B cell (primary cell): ENCODE measurements at regions of chr2 and their contacts with region 1.

Region 1: DNA sequence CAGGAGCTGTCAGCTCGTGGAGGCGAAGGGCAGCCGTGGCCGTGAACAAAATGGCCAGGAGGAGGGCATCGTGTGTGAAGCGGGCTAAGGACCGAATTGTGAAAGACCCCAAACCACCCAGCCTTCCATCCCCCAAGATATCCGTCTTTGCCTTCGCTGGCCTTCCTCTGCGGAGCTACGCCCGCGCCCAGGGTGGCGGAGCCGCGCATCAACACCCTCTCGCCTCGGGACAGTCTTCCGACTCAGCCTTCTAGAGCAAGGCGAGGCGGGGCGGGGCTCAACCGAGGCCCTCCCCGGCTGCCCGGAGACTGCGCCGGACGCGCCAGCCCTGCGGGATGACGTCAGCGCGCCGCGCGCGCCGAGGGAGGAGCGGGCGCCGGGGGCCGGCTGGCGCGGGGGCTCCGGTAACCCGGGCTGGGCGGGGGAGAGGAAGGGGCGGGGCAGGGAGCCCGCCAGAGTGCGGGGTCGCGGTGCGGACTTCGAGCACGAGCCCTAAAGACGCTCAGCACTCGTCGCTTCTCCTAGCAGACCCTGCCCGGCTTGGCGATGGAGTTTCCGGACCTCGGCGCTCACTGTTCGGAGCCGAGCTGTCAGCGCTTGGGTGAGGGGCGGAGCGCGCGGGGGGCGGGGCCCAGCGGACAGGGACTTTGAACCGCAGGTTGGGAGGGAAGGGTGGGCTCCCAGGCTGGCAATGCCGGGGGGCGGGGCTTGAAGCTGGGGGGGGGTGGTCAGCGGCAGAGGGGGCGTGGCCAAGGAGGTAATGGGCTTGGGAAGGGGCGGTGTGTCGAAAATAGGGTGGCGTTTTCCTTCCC is at the start of gene ZFAND2B:
- DNase-seq: peak; percentile 97
- ATAC-seq: peak; percentile 91
- H3K4me3 ChIP-seq: peak within 1 kb of the TSS; percentile 53 to 82 (median 76)
- H3K4me3 Mint-ChIP-seq: peak within 1 kb of the TSS; percentile 96
- H3K27ac ChIP-seq: peak within 1 kb of the TSS; percentile 84 to 94
- H3K27ac Mint-ChIP-seq: peak within 1 kb of the TSS; percentile 98
- H3K4me1 ChIP-seq: peaks cover 16 to 23% of the 10 kb centered on the region in 2 donors
- H3K4me1 Mint-ChIP-seq: peaks cover 28% of the 10 kb centered on the region
- H3K27me3 ChIP-seq: no peaks in the 10 kb centered on the region
- H3K27me3 Mint-ChIP-seq: no peaks in the 10 kb centered on the region
- CTCF ChIP-seq: no peak
- total RNA-seq, gene ZFAND2B: 55.2 and 58.7 TPM in 2 replicates

Region 2: GRCh38 chr2:219057709-219058540 is 148.7 kb before region 1 on chr2:
- CTCF ChIA-PET with region 1: interaction called, 12 read pairs
- POLR2A ChIA-PET with region 1: interaction called, 5 read pairs
- intact Hi-C with region 1: no loop called
- DNase-seq: peak; percentile 85
- ATAC-seq: peak; percentile 98
- H3K4me3 ChIP-seq: peak overlapping the region in 2 of 5 experiments; percentile 12 to 35
- H3K4me3 Mint-ChIP-seq: peak overlapping the region; percentile 74
- H3K27ac ChIP-seq: no peak overlapping the region
- H3K27ac Mint-ChIP-seq: peak overlapping the region; percentile 46
- H3K4me1 ChIP-seq: peaks cover 35 to 41% of the 10 kb centered on the region in 2 donors
- H3K4me1 Mint-ChIP-seq: peaks cover 24% of the 10 kb centered on the region
- H3K27me3 ChIP-seq: peaks cover 0 to 59% (median 45%) of the 10 kb centered on the region in 4 experiments
- H3K27me3 Mint-ChIP-seq: peaks cover 50% of the 10 kb centered on the region
- CTCF ChIP-seq: peak; percentile 91

Region 3: GRCh38 chr2:219171231-219171651 is 35.4 kb before region 1 on chr2:
- CTCF ChIA-PET with region 1: interaction called, 63 read pairs
- POLR2A ChIA-PET with region 1: interaction called, 46 read pairs
- intact Hi-C with region 1: loop called (anchors 1 kb)
- DNase-seq: peak; percentile 67
- ATAC-seq: peak; percentile 52
- H3K4me3 ChIP-seq: no peak overlapping the region
- H3K4me3 Mint-ChIP-seq: no peak overlapping the region
- H3K27ac ChIP-seq: peak overlapping the region in 1 of 2 donors; percentile 21
- H3K27ac Mint-ChIP-seq: peak overlapping the region; percentile 67
- H3K4me1 ChIP-seq: peaks cover 6 to 28% of the 10 kb centered on the region in 2 donors
- H3K4me1 Mint-ChIP-seq: peaks cover 25% of the 10 kb centered on the region
- H3K27me3 ChIP-seq: no peaks in the 10 kb centered on the region
- H3K27me3 Mint-ChIP-seq: no peaks in the 10 kb centered on the region
- CTCF ChIP-seq: peak; percentile 83

Region 4: GRCh38 chr2:219218732-219219701 is 12.4 kb after region 1 on chr2 and contains the start of gene ABCB6:
- CTCF ChIA-PET with region 1: interaction called, 10 read pairs
- POLR2A ChIA-PET with region 1: interaction called, 7 read pairs
- intact Hi-C with region 1: loop called (anchors 1 kb)
- DNase-seq: peak; percentile 92
- ATAC-seq: peak; percentile 95
- H3K4me3 ChIP-seq: peak within 1 kb of the TSS; percentile 51 to 74 (median 66)
- H3K4me3 Mint-ChIP-seq: peak within 1 kb of the TSS; percentile 87
- H3K27ac ChIP-seq: peak within 1 kb of the TSS; percentile 0 to 55
- H3K27ac Mint-ChIP-seq: peak within 1 kb of the TSS; percentile 86
- H3K4me1 ChIP-seq: peaks cover 17 to 21% of the 10 kb centered on the region in 2 donors
- H3K4me1 Mint-ChIP-seq: peaks cover 20% of the 10 kb centered on the region
- H3K27me3 ChIP-seq: no peaks in the 10 kb centered on the region
- H3K27me3 Mint-ChIP-seq: no peaks in the 10 kb centered on the region
- CTCF ChIP-seq: no peak
- total RNA-seq, gene ABCB6: 10.5 and 12.3 TPM in 2 replicates

Region 5: DNA sequence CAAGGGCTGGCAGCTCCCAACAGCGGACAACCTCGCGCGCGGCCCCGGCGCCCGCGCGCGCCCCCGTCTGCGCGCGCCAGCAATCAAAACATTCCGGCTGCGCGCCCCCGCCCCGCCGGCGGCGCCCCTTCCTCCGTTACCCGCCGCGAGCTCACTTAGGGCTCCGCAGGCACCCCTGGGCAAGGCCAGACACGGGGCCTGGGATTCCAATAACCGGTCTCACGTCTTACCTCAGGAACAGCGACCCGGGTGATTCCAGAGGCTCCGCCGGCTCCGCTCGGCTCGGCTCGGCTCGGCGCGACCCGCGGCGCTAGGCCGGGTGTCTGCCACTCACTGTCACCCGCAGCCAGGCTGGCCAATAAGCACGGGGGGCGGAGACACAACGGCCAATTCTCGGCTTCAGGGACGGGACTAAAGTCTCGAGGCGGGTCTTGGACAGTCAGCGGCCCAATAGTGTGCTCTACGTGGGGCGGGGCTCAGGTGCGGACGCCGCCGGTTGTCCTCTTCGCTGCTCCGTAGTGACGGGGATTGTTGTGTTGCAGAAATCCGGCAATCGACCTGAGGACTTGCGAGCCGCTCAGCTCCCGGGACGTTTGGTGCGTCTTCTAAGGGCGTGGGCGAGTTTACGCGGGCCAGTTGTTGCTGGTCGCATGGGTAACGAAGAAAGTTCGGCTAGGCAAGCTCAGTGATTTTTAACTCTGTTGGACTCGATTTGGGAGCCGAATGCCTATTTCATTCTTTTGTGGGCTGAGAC is 22.8 kb after region 1 on chr2 and contains the starts of genes ANKZF1 and ATG9A:
- CTCF ChIA-PET with region 1: interaction called, 5 read pairs
- POLR2A ChIA-PET with region 1: interaction called, 18 read pairs
- intact Hi-C with region 1: loop called (anchors 1 kb)
- DNase-seq: peak; percentile 98
- ATAC-seq: peak; percentile 97
- H3K4me3 ChIP-seq: peak within 1 kb of the TSS; percentile 86 to 98 (median 92)
- H3K4me3 Mint-ChIP-seq: peak within 1 kb of the TSS; percentile 99
- H3K27ac ChIP-seq: peak within 1 kb of the TSS; percentile 74 to 87
- H3K27ac Mint-ChIP-seq: peak within 1 kb of the TSS; percentile 98
- H3K4me1 ChIP-seq: peaks cover 17 to 23% of the 10 kb centered on the region in 2 donors
- H3K4me1 Mint-ChIP-seq: peaks cover 38% of the 10 kb centered on the region
- H3K27me3 ChIP-seq: no peaks in the 10 kb centered on the region
- H3K27me3 Mint-ChIP-seq: no peaks in the 10 kb centered on the region
- CTCF ChIP-seq: no peak
- total RNA-seq, gene ANKZF1: 181 and 199 TPM in 2 replicates
- total RNA-seq, gene ATG9A: 59.4 and 65.5 TPM in 2 replicates

Region 6: DNA sequence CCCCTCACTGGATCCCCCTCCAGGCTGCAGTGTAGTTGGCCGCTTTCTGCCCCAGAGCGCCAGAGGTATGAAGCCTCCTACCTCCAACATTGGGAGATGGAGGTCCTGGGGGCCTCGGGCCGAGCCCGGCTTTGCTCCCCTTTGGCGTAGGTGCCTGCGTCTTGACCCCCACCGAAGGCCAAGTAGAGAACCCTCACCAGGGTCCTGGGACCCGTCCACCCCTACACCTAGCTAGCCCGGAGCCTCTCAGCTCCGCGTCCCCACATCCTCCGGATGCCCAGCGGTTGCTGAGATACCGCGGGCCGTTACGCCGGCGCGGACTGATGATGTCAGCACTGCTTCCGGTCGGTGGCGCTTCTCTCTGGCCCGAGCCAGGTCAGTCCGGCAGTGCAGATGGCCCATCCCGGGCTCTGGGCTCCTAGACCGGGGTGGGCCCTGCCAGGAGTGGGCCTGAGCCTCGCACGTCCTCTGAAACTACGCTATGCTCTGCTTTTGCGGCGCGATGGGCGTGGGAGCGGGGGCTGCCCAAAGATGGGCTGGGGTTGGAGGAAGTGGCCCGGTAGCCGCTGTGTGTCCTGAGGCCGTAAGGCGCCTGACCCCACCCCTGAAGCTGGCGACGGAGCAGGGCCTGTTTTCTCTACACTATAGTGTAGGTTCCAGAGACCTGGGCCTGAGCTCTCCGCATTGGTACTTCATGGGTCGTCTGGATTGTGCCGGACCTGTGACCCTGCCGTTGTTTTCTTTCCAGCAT is 38.7 kb after region 1 on chr2 and contains the starts of genes GLB1L and STK16:
- CTCF ChIA-PET with region 1: interaction called, 8 read pairs
- POLR2A ChIA-PET with region 1: interaction called, 9 read pairs
- intact Hi-C with region 1: loop called (anchors 2 kb)
- DNase-seq: peak; percentile 93
- ATAC-seq: peak; percentile 67
- H3K4me3 ChIP-seq: peak within 1 kb of the TSS; percentile 50 to 98 (median 94)
- H3K4me3 Mint-ChIP-seq: peak within 1 kb of the TSS; percentile 92
- H3K27ac ChIP-seq: peak within 1 kb of the TSS; percentile 87 to 92
- H3K27ac Mint-ChIP-seq: peak within 1 kb of the TSS; percentile 96
- H3K4me1 ChIP-seq: peaks cover 52 to 58% of the 10 kb centered on the region in 2 donors
- H3K4me1 Mint-ChIP-seq: peaks cover 62% of the 10 kb centered on the region
- H3K27me3 ChIP-seq: no peaks in the 10 kb centered on the region
- H3K27me3 Mint-ChIP-seq: no peaks in the 10 kb centered on the region
- CTCF ChIP-seq: no peak
- total RNA-seq, gene GLB1L: 3.9 and 4.1 TPM in 2 replicates
- total RNA-seq, gene STK16: 29.0 and 29.3 TPM in 2 replicates

Region 7: GRCh38 chr2:219253753-219254590 is 47.3 kb after region 1 on chr2 and contains the start of gene TUBA4A:
- CTCF ChIA-PET with region 1: interaction called, 10 read pairs
- POLR2A ChIA-PET with region 1: interaction called, 15 read pairs
- intact Hi-C with region 1: loop called (anchors 1 kb)
- DNase-seq: peak; percentile 93
- ATAC-seq: peak; percentile 72
- H3K4me3 ChIP-seq: peak within 1 kb of the TSS; percentile 83 to 97 (median 90)
- H3K4me3 Mint-ChIP-seq: peak within 1 kb of the TSS; percentile 87
- H3K27ac ChIP-seq: peak within 1 kb of the TSS; percentile 93 to 94
- H3K27ac Mint-ChIP-seq: peak within 1 kb of the TSS; percentile 96
- H3K4me1 ChIP-seq: peaks cover 34 to 44% of the 10 kb centered on the region in 2 donors
- H3K4me1 Mint-ChIP-seq: peaks cover 49% of the 10 kb centered on the region
- H3K27me3 ChIP-seq: no peaks in the 10 kb centered on the region
- H3K27me3 Mint-ChIP-seq: no peaks in the 10 kb centered on the region
- CTCF ChIP-seq: no peak
- total RNA-seq, gene TUBA4A: 196 and 213 TPM in 2 replicates